Sigmoid colon (tissue), 7 donors: ENCODE measurements at regions of chr6 and their contacts with region 1.

Region 1: DNA sequence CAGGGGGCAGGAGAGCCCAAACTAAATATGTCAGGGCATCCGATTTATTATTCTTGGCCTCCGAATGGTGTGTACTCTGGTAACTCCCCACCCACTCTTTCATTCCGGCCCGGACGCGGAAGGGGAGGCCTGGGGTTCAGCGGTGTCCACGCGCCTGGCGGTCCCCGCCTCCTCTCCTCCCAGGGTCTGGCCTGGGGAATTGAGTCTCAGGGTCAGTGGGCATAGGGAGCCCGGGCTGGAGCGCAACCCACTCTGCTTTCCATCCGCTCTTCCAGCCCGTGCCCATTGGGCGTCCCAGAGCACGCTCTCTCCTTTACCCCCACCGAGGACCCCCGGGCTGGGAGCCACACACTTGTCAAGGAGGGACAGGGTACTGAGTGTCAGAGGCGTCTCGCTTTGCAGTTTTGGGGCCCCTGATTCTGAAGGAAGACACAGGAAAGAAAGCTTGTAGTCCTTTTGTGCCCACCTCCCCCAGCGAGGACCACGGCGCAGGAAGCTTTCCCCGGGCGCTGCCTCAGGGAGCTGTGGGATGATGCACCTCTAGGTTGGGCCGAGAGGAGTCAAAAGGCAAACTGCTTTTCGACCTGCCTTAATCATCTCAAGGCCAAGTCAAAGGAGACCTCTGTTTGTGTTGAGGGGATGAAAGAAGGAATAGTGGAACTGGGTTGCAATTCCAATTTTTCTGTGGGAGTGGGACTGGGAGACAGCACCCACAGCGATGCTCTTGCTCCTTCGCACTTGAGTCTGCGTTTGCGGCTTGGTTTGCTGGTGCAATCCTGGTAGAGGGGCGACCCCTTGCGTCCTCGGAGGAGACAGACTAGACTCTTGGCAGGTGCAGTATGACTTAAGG is 2.5 kb downstream of the RSPO3 start:
- DNase-seq: peak; percentile 91
- H3K4me3 ChIP-seq: peak overlapping the region; percentile 43 to 69 (median 58)
- H3K27ac ChIP-seq: peak overlapping the region; percentile 55 to 83 (median 72)
- H3K4me1 ChIP-seq: peaks cover 0 to 27% (median 25%) of the 10 kb centered on the region in 4 donors
- H3K27me3 ChIP-seq: peaks cover 0 to 43% (median 6%) of the 10 kb centered on the region in 3 donors
- CTCF ChIP-seq: peak; percentile 57 to 70 (median 62)
- EP300 ChIP-seq: no peak
- POLR2A ChIP-seq: no peak

Region 2: DNA sequence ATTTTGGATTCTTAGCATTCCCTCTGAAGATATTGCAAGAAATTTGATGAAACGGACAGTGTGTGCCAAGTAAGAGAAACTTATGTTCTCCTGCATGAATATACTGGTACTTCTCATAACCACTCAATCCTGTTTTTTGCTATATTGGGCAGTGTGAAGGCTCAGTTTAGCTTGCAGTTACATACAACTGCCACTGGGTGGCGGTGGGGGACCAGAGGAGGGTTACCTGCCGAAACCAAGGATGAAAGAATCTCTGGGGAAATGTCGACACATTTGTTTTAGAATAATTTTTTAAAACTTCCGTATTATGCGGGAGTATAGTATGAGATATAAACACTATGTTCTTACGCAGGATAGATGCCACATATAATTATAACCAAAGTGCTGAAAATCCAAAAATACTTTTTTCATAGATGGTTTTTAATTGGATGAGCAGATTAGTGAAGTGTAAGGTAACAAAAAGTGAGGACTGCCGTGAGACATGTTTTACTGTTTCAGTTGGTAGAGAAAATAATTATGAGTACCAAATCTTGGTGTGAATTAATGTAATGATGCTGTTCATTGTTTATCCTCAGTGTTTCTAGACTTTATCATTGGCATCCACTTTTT is 1124.9 kb before region 1 on chr6:
- intact Hi-C with region 1: loop called (anchors 5 kb)
- DNase-seq: peak; percentile 76
- H3K4me3 ChIP-seq: peak overlapping the region in 1 of 4 donors; percentile 14
- H3K27ac ChIP-seq: no peak overlapping the region
- H3K4me1 ChIP-seq: peaks cover 0 to 22% (median 15%) of the 10 kb centered on the region in 4 donors
- H3K27me3 ChIP-seq: no peaks in the 10 kb centered on the region
- CTCF ChIP-seq: peak; percentile 55 to 95 (median 88)
- EP300 ChIP-seq: no peak
- POLR2A ChIP-seq: no peak

Region 3: DNA sequence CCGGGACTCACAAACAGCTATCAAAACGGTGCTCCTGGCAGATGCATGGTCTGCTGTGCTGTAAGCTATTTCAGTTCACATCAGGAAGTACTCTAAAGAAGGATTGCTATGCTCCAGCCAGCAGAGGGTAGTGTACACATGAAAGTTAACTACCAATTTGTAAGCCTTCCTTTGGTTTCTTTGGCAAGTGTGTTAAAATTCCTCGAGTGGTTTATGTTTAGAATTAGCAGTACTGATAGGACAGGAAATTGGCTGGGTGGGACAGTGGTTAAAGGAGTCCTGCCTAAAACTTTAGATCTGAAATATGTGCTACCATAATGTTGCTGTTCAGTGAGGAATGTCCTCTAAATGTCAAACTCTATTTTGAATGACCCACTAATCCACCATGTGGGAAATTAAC is 1087.3 kb before region 1 on chr6:
- intact Hi-C with region 1: loop called (anchors 10 kb)
- DNase-seq: peak; percentile 64
- H3K4me3 ChIP-seq: no peak overlapping the region
- H3K27ac ChIP-seq: no peak overlapping the region
- H3K4me1 ChIP-seq: peaks cover 0 to 24% (median 12%) of the 10 kb centered on the region in 4 donors
- H3K27me3 ChIP-seq: no peaks in the 10 kb centered on the region
- CTCF ChIP-seq: peak in 2 of 4 experiments; percentile 52 to 59
- EP300 ChIP-seq: no peak
- POLR2A ChIP-seq: no peak

Region 4: DNA sequence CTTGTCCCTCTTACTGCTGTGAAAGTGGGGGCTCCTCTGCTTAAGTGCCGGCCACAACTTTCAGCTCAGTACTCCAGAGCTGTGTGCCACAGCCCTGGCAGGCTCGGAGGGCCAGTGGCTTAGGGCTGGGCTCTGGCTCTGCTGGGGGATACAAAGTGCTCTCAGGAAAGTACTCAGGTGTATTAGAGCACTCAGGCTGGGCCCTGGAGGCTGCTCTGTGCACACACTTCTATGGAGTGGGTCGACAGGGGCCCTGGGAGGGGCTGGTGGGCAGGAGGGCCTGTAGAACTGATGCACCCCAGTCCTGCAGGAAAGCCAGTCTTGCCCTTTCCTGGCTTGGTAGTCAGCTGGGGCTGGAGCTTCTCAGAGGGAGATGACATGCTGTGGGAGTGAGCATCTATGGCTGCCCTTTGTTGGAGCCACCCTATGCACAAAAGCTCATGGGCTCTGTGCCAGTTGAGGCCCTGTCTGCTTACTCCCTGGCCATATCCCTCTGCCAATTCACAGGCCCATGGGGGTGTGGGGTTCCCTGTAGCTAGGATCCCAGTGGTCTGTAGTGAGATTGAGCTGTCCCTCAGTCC is 759.1 kb before region 1 on chr6:
- intact Hi-C with region 1: loop called (anchors 5 kb)
- DNase-seq: no peak
- H3K4me3 ChIP-seq: no peak overlapping the region
- H3K27ac ChIP-seq: no peak overlapping the region
- H3K4me1 ChIP-seq: no peaks in the 10 kb centered on the region
- H3K27me3 ChIP-seq: no peaks in the 10 kb centered on the region
- CTCF ChIP-seq: no peak
- EP300 ChIP-seq: no peak
- POLR2A ChIP-seq: no peak

Region 5: DNA sequence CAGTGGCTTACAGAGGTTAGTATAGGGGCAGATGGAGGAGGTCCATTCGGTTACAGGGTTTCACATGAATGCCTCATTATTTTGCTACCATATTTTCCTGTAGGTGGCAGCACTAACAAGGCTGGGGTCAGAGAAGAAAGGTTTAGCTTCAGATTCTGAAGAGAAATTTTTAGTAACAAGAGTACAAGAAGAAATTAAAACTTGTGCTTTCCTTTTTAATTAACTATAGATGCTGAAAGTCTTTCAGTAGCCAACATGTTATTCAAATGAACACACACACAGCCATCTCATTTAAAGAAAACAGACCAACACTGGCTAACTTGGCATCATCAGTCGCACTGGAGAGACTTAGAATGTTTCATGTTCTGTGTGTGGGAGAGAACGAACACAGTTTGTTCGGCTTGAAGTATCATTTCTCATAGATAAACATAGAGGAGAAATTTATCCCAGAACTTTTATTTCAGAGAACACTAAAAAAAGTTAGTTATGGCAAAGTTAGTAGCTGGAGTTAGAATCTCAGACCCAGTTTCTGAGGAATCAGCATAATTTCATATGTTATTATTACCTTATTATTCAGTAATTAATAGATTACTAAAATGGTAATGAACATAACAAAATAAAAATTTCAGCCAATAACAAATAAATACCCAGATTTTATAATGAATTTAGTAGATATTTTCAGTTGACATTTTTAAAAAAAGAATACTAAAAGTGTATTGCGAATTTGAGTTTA is 316.5 kb before region 1 on chr6:
- intact Hi-C with region 1: loop called (anchors 5 kb)
- DNase-seq: no peak
- H3K4me3 ChIP-seq: no peak overlapping the region
- H3K27ac ChIP-seq: no peak overlapping the region
- H3K4me1 ChIP-seq: no peaks in the 10 kb centered on the region
- H3K27me3 ChIP-seq: no peaks in the 10 kb centered on the region
- CTCF ChIP-seq: peak; percentile 13 to 70 (median 42)
- EP300 ChIP-seq: no peak
- POLR2A ChIP-seq: no peak

Region 6: DNA sequence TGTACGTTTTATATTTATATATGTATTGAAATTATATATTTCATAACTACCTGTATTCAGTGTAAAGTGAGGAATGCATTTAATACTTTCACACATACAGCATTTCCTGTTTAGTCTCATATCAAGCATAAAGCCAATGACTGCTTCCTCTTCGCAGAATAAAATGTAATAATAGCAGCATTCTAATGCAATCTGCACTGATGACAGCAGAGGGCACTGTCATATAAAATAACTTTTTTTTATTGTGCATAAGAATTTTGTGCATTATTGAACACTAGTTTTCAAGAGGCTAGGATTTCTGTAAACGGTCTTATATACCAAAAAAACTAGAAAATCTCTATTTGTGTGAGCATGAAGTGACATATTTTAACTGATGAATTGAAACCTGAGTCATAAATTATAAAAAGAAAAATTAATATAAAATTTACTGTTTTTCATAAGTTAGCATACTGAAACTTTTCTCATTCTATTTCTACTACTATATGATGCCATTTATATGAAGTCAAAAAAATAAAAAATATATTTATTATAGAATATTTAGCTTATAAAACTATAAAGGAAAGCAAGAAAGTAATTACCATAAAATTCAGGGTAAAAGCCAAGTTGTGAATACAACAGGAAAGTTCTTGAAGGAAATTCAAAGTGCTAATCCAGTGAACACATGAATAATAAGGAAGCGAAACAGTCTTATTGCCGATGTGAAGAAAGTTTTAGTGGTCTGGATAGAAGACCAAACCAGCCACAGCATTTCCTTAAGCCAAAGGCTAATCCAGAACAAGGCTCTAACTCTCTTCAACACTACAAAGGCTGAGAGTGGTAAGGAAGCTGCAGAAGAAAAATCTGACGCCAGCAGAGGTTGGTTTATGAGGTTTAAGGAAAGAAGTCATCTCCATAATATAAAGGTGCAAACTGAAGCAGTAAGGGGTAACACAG is 182.0 kb after region 1 on chr6:
- intact Hi-C with region 1: no loop called
- DNase-seq: no peak
- H3K4me3 ChIP-seq: no peak overlapping the region
- H3K27ac ChIP-seq: no peak overlapping the region
- H3K4me1 ChIP-seq: peaks cover 0 to 50% (median 42%) of the 10 kb centered on the region in 4 donors
- H3K27me3 ChIP-seq: no peaks in the 10 kb centered on the region
- CTCF ChIP-seq: peak; percentile 62 to 70 (median 66)
- EP300 ChIP-seq: no peak
- POLR2A ChIP-seq: no peak